ENCODE measurements at regions of chr13 and their contacts with region 1.

Region 1: GRCh38 chr13:40974460-40975407 is 44.4 kb downstream of the ELF1 start:
- DNase-seq: peak; percentile 55
- H3K4me3 Mint-ChIP-seq: peak overlapping the region; percentile 21
- H3K27ac Mint-ChIP-seq: peak overlapping the region; percentile 67
- H3K4me1 Mint-ChIP-seq: peaks cover 88% of the 10 kb centered on the region
- H3K27me3 Mint-ChIP-seq: no peaks in the 10 kb centered on the region

Region 2: GRCh38 chr13:40984668-40985366 is 10.1 kb after region 1 on chr13:
- CTCF ChIA-PET with region 1: interaction called, 17 read pairs
- DNase-seq: peak; percentile 23
- H3K4me3 Mint-ChIP-seq: peak overlapping the region; percentile 83
- H3K27ac Mint-ChIP-seq: peak overlapping the region; percentile 99
- H3K4me1 Mint-ChIP-seq: peaks cover 61% of the 10 kb centered on the region
- H3K27me3 Mint-ChIP-seq: no peaks in the 10 kb centered on the region

Region 3: GRCh38 chr13:41013835-41014234 is 39.1 kb after region 1 on chr13:
- CTCF ChIA-PET with region 1: interaction called, 19 read pairs
- DNase-seq: no peak
- H3K4me3 Mint-ChIP-seq: peak overlapping the region; percentile 96
- H3K27ac Mint-ChIP-seq: peak overlapping the region; percentile 86
- H3K4me1 Mint-ChIP-seq: peaks cover 58% of the 10 kb centered on the region
- H3K27me3 Mint-ChIP-seq: no peaks in the 10 kb centered on the region

Region 4: GRCh38 chr13:41029629-41030028 is 54.9 kb after region 1 on chr13:
- CTCF ChIA-PET with region 1: interaction called, 26 read pairs
- DNase-seq: peak; percentile 34
- H3K4me3 Mint-ChIP-seq: no peak overlapping the region
- H3K27ac Mint-ChIP-seq: no peak overlapping the region
- H3K4me1 Mint-ChIP-seq: peaks cover 24% of the 10 kb centered on the region
- H3K27me3 Mint-ChIP-seq: no peaks in the 10 kb centered on the region

Region 5: GRCh38 chr13:41061075-41061913 is 86.6 kb after region 1 on chr13 and contains the start of gene WBP4:
- CTCF ChIA-PET with region 1: interaction called, 11 read pairs
- DNase-seq: peak; percentile 90
- H3K4me3 Mint-ChIP-seq: peak within 1 kb of the TSS; percentile 99
- H3K27ac Mint-ChIP-seq: peak within 1 kb of the TSS; percentile 99
- H3K4me1 Mint-ChIP-seq: peaks cover 49% of the 10 kb centered on the region
- H3K27me3 Mint-ChIP-seq: peaks cover 16% of the 10 kb centered on the region

Region 6: DNA sequence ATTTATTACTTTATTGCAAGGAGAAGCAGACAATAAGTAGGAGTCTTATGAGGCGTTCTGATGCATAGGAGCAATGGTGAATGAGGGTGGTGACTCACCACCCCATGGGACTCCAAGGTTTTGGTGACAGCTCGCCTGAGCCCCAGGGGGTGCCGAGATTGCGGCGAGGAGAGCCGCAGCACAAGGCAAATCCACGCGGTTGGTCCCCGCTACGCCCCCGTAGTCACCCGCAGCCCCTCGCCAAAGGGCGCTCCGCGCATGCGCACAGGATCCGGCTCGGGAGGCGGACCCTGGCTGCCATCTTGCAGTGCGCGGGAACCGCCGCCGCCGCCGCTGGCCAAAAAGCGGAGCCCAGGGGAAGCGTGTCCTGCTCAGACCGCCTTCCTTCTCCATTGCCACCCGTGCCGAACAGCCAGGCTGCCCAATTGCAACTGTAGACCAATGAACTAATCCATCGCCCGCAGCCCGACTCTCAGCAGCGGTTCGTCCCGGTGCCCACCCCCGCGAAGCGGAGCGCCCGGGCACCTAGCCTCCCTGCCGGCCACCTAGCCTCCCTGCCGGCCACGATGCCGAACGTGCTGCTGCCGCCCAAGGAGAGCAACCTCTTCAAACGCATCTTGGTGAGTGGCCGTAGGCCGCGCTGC is 336.4 kb after region 1 on chr13 and contains the start of gene NAA16:
- CTCF ChIA-PET with region 1: no interaction called
- DNase-seq: peak; percentile 94
- H3K4me3 Mint-ChIP-seq: peak within 1 kb of the TSS; percentile 96
- H3K27ac Mint-ChIP-seq: peak within 1 kb of the TSS; percentile 95
- H3K4me1 Mint-ChIP-seq: peaks cover 41% of the 10 kb centered on the region
- H3K27me3 Mint-ChIP-seq: peaks cover 7% of the 10 kb centered on the region

Region 7: DNA sequence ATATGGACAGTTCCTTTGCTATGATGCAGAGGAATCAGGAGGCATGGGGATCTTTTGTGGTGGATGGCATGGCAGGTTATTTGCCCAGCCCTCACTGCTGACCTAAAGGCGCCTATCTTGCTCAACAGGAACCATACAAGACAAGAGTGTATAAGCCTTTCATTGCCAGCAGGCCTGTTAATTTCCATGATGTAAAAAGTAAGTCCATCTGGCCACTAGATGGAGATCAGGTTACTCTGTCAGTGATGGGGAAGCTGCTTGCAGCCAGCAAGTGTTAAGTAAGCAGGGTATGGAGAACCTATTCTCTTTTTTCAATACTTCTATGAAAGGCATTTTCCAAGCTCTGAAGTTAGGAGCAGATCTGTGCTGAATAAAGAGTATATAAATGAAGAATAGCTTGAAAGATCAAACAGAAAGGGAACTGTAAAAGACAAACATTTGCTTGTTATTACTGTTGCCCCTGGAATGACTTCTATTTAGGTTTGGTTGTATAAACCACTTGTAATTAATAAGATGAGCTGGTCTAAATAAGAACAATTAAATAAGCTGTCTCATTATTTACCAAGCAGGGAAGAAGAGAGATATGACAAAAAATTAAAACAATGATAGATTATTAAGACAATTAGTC is 693.5 kb after region 1 on chr13:
- CTCF ChIA-PET with region 1: no interaction called
- DNase-seq: peak; percentile 56
- H3K4me3 Mint-ChIP-seq: no peak overlapping the region
- H3K27ac Mint-ChIP-seq: no peak overlapping the region
- H3K4me1 Mint-ChIP-seq: no peaks in the 10 kb centered on the region
- H3K27me3 Mint-ChIP-seq: no peaks in the 10 kb centered on the region